ENCODE measurements at regions of chr4 and their contacts with region 1.

Region 1: DNA sequence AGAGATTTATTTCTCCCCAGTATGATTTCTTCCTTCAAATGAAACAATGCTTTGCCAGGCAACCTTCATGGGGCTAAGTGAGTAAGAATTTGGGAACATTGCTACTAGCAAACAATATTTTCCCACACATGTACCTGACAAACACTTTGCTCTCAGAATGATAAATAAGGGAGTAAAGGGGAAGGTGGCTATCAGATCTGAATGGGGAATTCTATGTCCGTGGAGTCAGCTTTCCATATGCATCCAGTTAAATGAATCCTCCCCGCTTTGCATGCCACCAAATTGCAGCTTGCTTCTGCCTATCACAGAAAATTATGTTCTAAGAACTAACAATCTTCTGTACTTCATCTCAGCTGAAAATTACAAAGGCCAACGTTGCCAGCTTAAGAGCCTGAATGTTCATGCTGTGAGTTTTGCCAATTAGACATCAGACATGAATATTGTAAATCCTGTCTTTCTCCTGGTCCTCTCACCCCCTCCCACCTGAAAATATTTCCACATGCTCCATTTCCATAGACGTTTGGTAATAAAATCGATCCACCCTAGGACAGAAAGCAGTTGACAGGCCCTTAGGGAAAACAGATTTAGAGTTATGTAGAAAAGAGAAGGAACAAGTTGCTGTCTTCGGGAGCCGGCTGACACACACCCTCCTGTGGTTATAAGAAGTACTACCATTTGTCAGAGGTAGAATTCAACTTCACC is 6.3 kb downstream of the MEPE start:
- DNase-seq: no peak
- H3K4me3 ChIP-seq: no peak overlapping the region
- H3K27ac ChIP-seq: no peak overlapping the region
- H3K4me1 ChIP-seq: no peaks in the 10 kb centered on the region
- H3K27me3 ChIP-seq: no peaks in the 10 kb centered on the region
- CTCF ChIP-seq: peak; percentile 57

Region 2: GRCh38 chr4:87150498-87151261 is 688.4 kb before region 1 on chr4:
- intact Hi-C with region 1: no loop called
- DNase-seq: peak; percentile 86
- H3K4me3 ChIP-seq: no peak overlapping the region
- H3K27ac ChIP-seq: no peak overlapping the region
- H3K4me1 ChIP-seq: no peaks in the 10 kb centered on the region
- H3K27me3 ChIP-seq: no peaks in the 10 kb centered on the region
- CTCF ChIP-seq: peak; percentile 94

Region 3: GRCh38 chr4:87543835-87544461 is 295.1 kb before region 1 on chr4:
- intact Hi-C with region 1: loop called (anchors 5 kb)
- DNase-seq: no peak
- H3K4me3 ChIP-seq: no peak overlapping the region
- H3K27ac ChIP-seq: no peak overlapping the region
- H3K4me1 ChIP-seq: no peaks in the 10 kb centered on the region
- H3K27me3 ChIP-seq: no peaks in the 10 kb centered on the region
- CTCF ChIP-seq: no peak

Region 4: GRCh38 chr4:88230969-88231771 is 392.1 kb after region 1 on chr4:
- intact Hi-C with region 1: no loop called
- DNase-seq: no peak
- H3K4me3 ChIP-seq: no peak overlapping the region
- H3K27ac ChIP-seq: peak overlapping the region; percentile 24
- H3K4me1 ChIP-seq: no peaks in the 10 kb centered on the region
- H3K27me3 ChIP-seq: no peaks in the 10 kb centered on the region
- CTCF ChIP-seq: no peak